AG04449 (cell line): ENCODE measurements at regions of chr22 and their contacts with region 1.

Region 1: GRCh38 chr22:29587938-29588699 is 7.2 kb upstream of the NIPSNAP1 start:
- DNase-seq: peak; percentile 63
- H3K4me3 ChIP-seq: no peak overlapping the region
- CTCF ChIP-seq: no peak

Region 2: GRCh38 chr22:29553351-29554224 is 34.5 kb before region 1 on chr22 and contains the start of gene THOC5:
- CTCF ChIA-PET with region 1: interaction called, 11 read pairs
- POLR2A ChIA-PET with region 1: no interaction called
- DNase-seq: peak; percentile 63
- H3K4me3 ChIP-seq: peak within 1 kb of the TSS; percentile 79
- CTCF ChIP-seq: peak; percentile 77

Region 3: DNA sequence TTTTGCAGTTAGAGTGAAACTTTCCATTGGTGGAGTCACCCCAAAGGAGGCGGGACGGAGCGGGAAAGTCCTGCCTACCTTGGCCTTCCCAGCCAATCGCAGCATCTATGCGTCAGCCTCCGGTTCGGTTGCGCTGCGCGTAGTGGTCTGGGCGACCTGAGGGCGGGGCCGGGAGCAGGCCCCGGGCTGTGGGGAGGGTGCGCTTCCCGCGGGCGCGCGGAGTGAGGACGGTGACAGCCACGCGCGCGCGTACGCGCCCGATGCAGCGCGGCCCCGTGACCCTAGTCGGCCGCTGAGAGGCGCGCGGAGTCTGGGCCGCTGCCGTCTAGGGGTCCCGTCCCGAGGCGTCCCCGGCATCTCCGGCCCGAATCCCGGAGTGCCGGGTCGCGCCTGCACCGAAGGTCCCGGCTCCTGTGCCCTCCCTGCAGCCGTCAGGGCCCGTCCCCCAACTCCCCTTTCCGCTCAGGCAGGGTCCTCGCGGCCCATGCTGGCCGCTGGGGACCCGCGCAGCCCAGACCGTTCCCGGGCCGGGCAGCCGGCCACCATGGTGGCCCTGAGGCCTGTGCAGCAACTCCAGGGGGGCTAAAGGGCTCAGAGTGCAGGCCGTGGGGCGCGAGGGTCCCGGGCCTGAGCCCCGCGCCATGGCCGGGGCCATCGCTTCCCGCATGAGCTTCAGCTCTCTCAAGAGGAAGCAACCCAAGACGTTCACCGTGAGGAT is 15.4 kb after region 1 on chr22 and contains the start of gene NF2:
- CTCF ChIA-PET with region 1: interaction called, 50 read pairs
- POLR2A ChIA-PET with region 1: no interaction called
- DNase-seq: peak; percentile 95
- H3K4me3 ChIP-seq: peak within 1 kb of the TSS; percentile 76
- CTCF ChIP-seq: no peak

Region 4: GRCh38 chr22:29617922-29618629 is 30.0 kb after region 1 on chr22:
- CTCF ChIA-PET with region 1: interaction called, 14 read pairs
- POLR2A ChIA-PET with region 1: no interaction called
- DNase-seq: no peak
- H3K4me3 ChIP-seq: no peak overlapping the region
- CTCF ChIP-seq: no peak

Region 5: GRCh38 chr22:29625090-29625825 is 37.1 kb after region 1 on chr22:
- CTCF ChIA-PET with region 1: interaction called, 18 read pairs
- POLR2A ChIA-PET with region 1: no interaction called
- DNase-seq: no peak
- H3K4me3 ChIP-seq: no peak overlapping the region
- CTCF ChIP-seq: peak; percentile 63

Region 6: GRCh38 chr22:29635734-29636357 is 47.7 kb after region 1 on chr22:
- CTCF ChIA-PET with region 1: interaction called, 19 read pairs
- POLR2A ChIA-PET with region 1: no interaction called
- DNase-seq: no peak
- H3K4me3 ChIP-seq: no peak overlapping the region
- CTCF ChIP-seq: peak; percentile 66